ENCODE measurements at regions of chr2 and their contacts with region 1.

Region 1: GRCh38 chr2:6352906-6353515 is 512.7 kb downstream of the CMPK2 start:
- DNase-seq: peak; percentile 24
- H3K4me3 ChIP-seq: no peak overlapping the region
- H3K27ac ChIP-seq: no peak overlapping the region
- H3K27me3 ChIP-seq: no peaks in the 10 kb centered on the region
- CTCF ChIP-seq: peak; percentile 86

Region 2: GRCh38 chr2:6773007-6773693 is 420.1 kb after region 1 on chr2:
- CTCF ChIA-PET with region 1: interaction called, 55 read pairs
- POLR2A ChIA-PET with region 1: no interaction called
- DNase-seq: no peak
- H3K4me3 ChIP-seq: peak overlapping the region; percentile 27; the same call in 1 of the 2 replicates
- H3K27ac ChIP-seq: no peak overlapping the region
- H3K27me3 ChIP-seq: no peaks in the 10 kb centered on the region
- CTCF ChIP-seq: peak; percentile 94

Measured in AG04450 (cell line).